ENCODE measurements at regions of chr5 and their contacts with region 1.

Region 1: GRCh38 chr5:134648425-134649162 is at the start of gene SEC24A:
- DNase-seq: peak; percentile 65 to 89
- H3K4me3 ChIP-seq: peak within 1 kb of the TSS; percentile 72 to 85 (median 78)
- H3K27ac ChIP-seq: peak within 1 kb of the TSS; percentile 77
- H3K4me1 ChIP-seq: no peaks in the 10 kb centered on the region
- H3K27me3 ChIP-seq: no peaks in the 10 kb centered on the region
- CTCF ChIP-seq: no peak
- EP300 ChIP-seq: peak in 1 of 2 experiments; percentile 9; a peak in 1 of 3 replicates
- POLR2A ChIP-seq: peak; percentile 31 to 80
- RAD21 ChIP-seq: no peak
- total RNA-seq, gene SEC24A: 31.0 and 33.7 TPM in 2 replicates

Region 2: DNA sequence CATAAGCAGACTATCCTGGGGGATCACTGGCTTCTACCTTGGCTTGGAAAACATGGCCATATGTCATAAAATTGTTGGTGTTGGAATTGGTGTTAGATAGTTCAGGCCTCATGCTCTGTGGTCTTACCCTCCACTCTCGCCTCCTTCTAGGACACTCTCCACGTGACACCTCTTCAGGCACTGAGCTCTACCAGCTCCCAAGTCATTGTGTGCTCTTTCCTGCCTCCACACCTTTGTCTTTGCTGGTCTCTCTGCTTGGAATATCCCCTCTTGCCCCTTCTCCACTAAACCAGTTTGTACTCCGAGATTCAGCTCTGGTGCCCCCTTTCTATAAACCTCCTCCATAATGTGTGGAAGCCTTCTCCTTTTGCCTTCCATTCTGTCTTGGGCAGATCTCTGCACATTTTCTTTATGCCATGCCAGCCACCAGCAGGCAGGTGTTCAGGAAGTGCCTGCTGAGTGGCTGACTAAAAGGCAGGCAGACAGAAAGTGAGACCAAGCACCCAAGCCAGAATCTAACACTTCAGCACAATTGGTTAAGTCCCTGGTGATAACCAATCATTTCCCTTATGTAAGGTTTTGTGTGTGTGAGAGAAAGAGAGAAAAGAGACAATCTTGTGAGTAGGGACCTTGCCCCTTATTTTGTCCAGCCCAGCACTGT is 53.7 kb before region 1 on chr5:
- CTCF ChIA-PET with region 1: no interaction called
- POLR2A ChIA-PET with region 1: interaction called, 13 read pairs
- DNase-seq: no peak
- H3K4me3 ChIP-seq: no peak overlapping the region
- H3K27ac ChIP-seq: no peak overlapping the region
- H3K4me1 ChIP-seq: peaks cover 14 to 24% (median 17%) of the 10 kb centered on the region in 4 experiments
- H3K27me3 ChIP-seq: no peaks in the 10 kb centered on the region
- CTCF ChIP-seq: no peak
- EP300 ChIP-seq: no peak
- POLR2A ChIP-seq: no peak
- RAD21 ChIP-seq: no peak

Region 3: DNA sequence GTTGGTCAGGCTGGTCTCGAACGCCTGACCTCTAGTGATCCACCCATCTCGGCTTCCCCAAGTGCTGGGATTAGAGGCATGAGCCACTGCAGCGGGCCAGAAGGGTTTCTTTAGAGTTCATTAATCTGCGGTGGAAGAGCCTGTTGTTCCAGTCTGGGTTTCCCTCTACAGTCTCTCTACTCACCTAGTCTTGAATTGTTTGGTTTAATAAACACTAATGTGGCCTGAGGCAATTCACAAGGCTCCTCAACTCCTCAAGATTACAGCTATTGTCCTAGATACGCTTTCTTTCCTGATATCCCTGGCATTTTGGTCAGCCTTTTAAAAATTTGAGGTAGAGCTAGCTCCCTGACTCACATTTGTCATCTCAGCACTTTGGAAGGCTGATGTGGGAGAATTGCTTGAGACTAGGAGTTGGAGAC is 11.4 kb before region 1 on chr5:
- CTCF ChIA-PET with region 1: interaction called, 5 read pairs
- POLR2A ChIA-PET with region 1: interaction called, 74 read pairs
- DNase-seq: no peak
- H3K4me3 ChIP-seq: no peak overlapping the region
- H3K27ac ChIP-seq: no peak overlapping the region
- H3K4me1 ChIP-seq: no peaks in the 10 kb centered on the region
- H3K27me3 ChIP-seq: no peaks in the 10 kb centered on the region
- CTCF ChIP-seq: no peak
- EP300 ChIP-seq: no peak
- POLR2A ChIP-seq: no peak
- RAD21 ChIP-seq: no peak